A673 (cell line): ENCODE measurements at regions of chr11 and their contacts with region 1.

Region 1: GRCh38 chr11:91871791-91872190 is 352.8 kb upstream of the FAT3 start:
- DNase-seq: peak; percentile 97
- H3K4me3 ChIP-seq: peak overlapping the region; percentile 11
- H3K27ac ChIP-seq: peak overlapping the region; percentile 92
- H3K4me1 ChIP-seq: peaks cover 67% of the 10 kb centered on the region
- H3K27me3 ChIP-seq: no peaks in the 10 kb centered on the region
- CTCF ChIP-seq: no peak

Region 2: DNA sequence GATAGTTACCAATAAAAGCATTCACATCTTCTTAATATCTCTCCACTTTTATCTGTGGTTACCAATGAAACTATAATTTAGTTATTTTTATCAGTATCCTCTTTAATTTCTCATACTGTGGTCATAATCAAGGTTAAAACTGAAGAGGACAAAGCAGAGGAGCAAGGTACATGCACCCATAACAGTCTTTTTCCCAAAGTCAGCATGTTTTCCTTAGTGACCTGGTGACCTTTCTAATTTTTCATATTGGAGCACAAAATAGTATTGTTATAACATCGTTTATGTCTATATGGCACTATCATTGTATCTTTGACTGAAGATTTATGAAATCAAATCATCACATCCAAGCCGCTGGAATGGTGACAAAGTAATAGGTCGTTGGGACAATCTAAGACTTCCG is 1597.4 kb before region 1 on chr11:
- CTCF ChIA-PET with region 1: no interaction called
- POLR2A ChIA-PET with region 1: no interaction called
- intact Hi-C with region 1: loop called (anchors 10 kb)
- DNase-seq: no peak
- H3K4me3 ChIP-seq: no peak overlapping the region
- H3K27ac ChIP-seq: no peak overlapping the region
- H3K4me1 ChIP-seq: no peaks in the 10 kb centered on the region
- H3K27me3 ChIP-seq: no peaks in the 10 kb centered on the region
- CTCF ChIP-seq: no peak

Region 3: GRCh38 chr11:91773090-91773489 is 98.7 kb before region 1 on chr11:
- CTCF ChIA-PET with region 1: no interaction called
- POLR2A ChIA-PET with region 1: no interaction called
- intact Hi-C with region 1: loop called (anchors 2 kb)
- DNase-seq: peak; percentile 86
- H3K4me3 ChIP-seq: no peak overlapping the region
- H3K27ac ChIP-seq: no peak overlapping the region
- H3K4me1 ChIP-seq: peaks cover 9% of the 10 kb centered on the region
- H3K27me3 ChIP-seq: no peaks in the 10 kb centered on the region
- CTCF ChIP-seq: peak; percentile 81

Region 4: DNA sequence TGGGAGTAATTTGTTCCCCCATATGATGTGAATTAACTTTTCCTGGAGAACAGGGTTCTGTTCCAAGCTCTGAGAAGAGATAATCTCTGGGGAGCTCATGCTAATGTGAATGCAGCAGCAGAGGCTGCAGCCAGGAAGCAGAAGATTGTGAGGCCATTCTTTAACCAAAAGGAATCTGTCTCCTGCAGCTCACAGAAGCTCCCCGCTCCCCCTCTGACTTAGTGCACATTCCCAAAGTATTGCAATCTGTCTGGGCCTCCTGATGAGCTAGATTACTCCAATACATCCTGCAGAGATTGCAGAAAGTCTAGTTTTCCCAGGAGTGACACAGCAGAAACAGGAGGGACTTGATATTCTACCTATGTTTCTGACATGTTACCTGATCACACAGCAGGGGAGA is 67.7 kb before region 1 on chr11:
- CTCF ChIA-PET with region 1: no interaction called
- POLR2A ChIA-PET with region 1: no interaction called
- intact Hi-C with region 1: loop called (anchors 5 kb)
- DNase-seq: peak; percentile 91
- H3K4me3 ChIP-seq: no peak overlapping the region
- H3K27ac ChIP-seq: peak overlapping the region; percentile 25
- H3K4me1 ChIP-seq: peaks cover 26% of the 10 kb centered on the region
- H3K27me3 ChIP-seq: no peaks in the 10 kb centered on the region
- CTCF ChIP-seq: no peak

Region 5: GRCh38 chr11:91837411-91838330 is 34.1 kb before region 1 on chr11:
- CTCF ChIA-PET with region 1: no interaction called
- POLR2A ChIA-PET with region 1: no interaction called
- intact Hi-C with region 1: loop called (anchors 2 kb)
- DNase-seq: peak; percentile 97
- H3K4me3 ChIP-seq: no peak overlapping the region
- H3K27ac ChIP-seq: no peak overlapping the region
- H3K4me1 ChIP-seq: peaks cover 58% of the 10 kb centered on the region
- H3K27me3 ChIP-seq: no peaks in the 10 kb centered on the region
- CTCF ChIP-seq: no peak

Region 6: DNA sequence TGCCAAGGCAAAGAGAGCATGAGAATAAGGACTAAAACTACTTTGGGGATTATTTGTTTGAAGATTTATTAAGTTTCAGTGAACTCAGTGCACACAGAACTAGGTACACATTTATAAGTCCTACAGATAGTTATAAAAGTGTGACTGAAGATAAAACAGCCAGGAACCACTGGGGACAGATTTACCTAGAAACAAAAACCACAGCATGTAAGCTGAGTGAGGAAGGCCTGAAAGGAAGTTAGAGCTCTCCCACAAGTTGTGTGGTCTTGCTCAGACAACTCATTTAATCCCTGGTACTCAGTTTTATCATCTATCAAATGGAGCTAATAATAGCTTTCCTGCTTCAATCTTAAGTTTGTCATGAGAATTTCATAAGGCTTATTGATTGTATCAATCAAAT is 41.6 kb after region 1 on chr11:
- CTCF ChIA-PET with region 1: no interaction called
- POLR2A ChIA-PET with region 1: no interaction called
- intact Hi-C with region 1: no loop called
- DNase-seq: no peak
- H3K4me3 ChIP-seq: no peak overlapping the region
- H3K27ac ChIP-seq: no peak overlapping the region
- H3K4me1 ChIP-seq: no peaks in the 10 kb centered on the region
- H3K27me3 ChIP-seq: no peaks in the 10 kb centered on the region
- CTCF ChIP-seq: no peak

Region 7: DNA sequence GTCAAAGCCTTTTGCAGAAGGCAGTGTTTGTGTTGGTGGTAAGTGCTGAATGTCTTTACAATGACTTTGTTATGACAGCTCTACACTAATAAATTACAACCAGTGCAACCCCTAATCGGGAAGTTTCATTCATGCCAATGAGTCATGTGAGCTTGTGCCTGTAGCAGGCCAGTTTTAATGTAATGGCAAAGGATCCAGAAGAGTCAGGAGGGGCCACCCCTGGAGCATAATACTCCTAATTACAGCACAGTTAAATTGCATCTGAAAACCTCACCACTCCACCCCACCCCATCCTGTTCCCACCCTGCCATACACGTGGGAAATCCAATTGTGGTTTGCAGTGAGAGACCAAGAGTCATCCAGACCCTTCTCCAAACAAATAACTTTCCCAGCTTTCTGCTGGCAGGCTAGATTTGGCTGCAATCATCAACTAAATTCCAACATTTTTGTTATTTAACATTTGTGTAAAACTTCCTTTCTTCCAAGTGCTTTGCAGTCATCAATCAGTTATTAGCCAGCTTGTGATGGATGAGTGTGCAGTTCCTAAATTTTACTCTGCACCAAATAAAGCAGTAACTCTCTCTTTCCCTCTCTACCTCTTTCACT is 75.5 kb after region 1 on chr11:
- CTCF ChIA-PET with region 1: no interaction called
- POLR2A ChIA-PET with region 1: no interaction called
- intact Hi-C with region 1: loop called (anchors 2 kb)
- DNase-seq: peak; percentile 81
- H3K4me3 ChIP-seq: no peak overlapping the region
- H3K27ac ChIP-seq: peak overlapping the region; percentile 21
- H3K4me1 ChIP-seq: peaks cover 24% of the 10 kb centered on the region
- H3K27me3 ChIP-seq: no peaks in the 10 kb centered on the region
- CTCF ChIP-seq: no peak

Region 8: DNA sequence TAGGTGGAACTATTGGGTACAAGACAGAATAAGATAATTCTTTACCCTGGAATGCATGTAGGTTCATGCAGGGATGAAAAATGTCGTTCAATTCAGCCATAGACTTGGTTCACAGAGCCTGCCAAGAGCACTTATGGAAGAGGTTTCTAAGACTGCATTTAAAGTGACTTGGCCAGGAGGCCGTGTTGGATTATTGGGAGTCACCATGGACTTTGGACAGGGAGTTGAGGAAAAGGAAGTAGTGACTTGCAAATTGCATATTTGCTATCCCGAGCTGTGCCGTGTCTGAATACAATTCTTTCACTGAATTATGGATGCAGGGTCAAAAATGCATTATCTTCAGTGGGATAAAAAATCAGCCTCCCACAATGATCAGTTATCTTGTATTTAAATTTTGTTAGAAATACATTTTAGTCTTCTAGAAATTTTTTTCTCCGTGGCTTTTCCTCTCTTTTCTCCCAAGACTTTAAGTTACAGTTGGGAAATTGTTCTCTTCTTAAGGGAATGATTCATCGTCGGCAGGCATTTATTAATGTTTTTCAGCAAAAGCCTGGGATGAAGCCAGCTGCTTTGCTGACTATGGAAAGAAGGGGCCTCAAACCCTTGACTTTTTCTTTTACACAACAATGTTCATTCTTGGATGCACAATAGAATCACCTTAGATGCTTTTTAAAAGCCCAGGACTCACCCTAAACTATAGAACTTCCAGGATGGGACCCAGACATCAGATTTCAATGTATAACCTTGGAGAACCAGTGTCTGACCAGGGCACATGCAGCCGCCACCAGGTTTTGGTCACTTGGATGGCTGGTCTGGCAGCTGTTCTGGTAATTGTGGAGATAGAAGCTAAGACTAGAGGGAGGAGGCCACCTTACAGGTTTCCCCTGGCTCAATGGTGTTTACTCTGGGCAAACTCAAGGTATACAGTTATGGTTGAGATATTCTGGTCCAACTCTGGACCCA is 423.7 kb after region 1 on chr11:
- CTCF ChIA-PET with region 1: no interaction called
- POLR2A ChIA-PET with region 1: no interaction called
- intact Hi-C with region 1: loop called (anchors 5 kb)
- DNase-seq: no peak
- H3K4me3 ChIP-seq: no peak overlapping the region
- H3K27ac ChIP-seq: no peak overlapping the region
- H3K4me1 ChIP-seq: peaks cover 19% of the 10 kb centered on the region
- H3K27me3 ChIP-seq: peaks cover 30% of the 10 kb centered on the region
- CTCF ChIP-seq: no peak